Motor neuron (in vitro differentiated cells): ENCODE measurements at regions of chr12 and their contacts with region 1.

Region 1: DNA sequence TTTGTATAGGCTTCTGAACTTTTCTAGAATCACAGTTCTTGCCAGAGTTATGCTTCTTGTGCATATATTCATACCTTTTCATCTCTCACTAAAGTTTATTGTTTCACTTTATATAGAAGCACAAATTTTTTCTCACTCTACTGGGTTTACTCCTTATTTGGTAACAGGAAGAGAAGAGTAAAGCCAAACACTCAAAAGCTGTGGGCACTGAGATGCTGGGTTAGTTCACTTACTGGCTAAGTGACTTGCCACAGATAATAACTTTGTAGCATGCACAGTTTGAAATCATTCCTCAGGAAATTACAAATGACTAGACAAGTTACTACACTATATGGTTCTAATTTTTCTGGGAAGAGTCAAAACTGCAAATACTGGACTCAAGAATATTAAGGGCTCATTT is 7.8 kb downstream of the HIGD1C start:
- ATAC-seq: no peak
- H3K4me3 ChIP-seq: no peak overlapping the region
- H3K27ac ChIP-seq: no peak overlapping the region
- H3K4me1 ChIP-seq: no peaks in the 10 kb centered on the region

Region 2: DNA sequence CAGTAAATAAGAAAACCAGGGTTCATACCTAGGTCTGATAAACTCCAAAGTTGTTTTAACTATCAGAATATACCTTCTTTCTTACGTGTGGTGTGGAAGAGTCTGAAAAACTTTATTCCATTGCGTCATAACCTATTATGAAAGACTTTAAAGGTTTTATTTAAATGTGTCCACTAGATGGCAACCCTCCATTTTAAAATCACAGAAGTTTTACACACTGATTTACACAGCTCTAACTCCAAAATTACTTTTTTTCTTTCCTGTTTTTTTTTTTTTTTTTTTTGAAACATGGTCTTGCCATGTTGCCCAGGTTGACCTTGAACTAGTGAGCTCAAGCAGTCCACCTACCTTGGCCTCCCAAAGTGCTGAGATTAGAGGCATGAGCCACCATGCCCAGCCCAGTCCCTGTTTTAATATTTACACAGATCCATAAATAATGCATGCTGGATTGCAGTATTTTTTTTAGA is 134.7 kb before region 1 on chr12:
- in situ Hi-C with region 1: loop called in 1 of 9 experiments (anchors 25 kb)
- ATAC-seq: peak in 5 of 8 experiments; percentile 18 to 91 (median 82)
- H3K4me3 ChIP-seq: no peak overlapping the region
- H3K27ac ChIP-seq: no peak overlapping the region
- H3K4me1 ChIP-seq: no peaks in the 10 kb centered on the region